CD4-positive, alpha-beta T cell (primary cell): ENCODE measurements at regions of chr16 and their contacts with region 1.

Region 1: DNA sequence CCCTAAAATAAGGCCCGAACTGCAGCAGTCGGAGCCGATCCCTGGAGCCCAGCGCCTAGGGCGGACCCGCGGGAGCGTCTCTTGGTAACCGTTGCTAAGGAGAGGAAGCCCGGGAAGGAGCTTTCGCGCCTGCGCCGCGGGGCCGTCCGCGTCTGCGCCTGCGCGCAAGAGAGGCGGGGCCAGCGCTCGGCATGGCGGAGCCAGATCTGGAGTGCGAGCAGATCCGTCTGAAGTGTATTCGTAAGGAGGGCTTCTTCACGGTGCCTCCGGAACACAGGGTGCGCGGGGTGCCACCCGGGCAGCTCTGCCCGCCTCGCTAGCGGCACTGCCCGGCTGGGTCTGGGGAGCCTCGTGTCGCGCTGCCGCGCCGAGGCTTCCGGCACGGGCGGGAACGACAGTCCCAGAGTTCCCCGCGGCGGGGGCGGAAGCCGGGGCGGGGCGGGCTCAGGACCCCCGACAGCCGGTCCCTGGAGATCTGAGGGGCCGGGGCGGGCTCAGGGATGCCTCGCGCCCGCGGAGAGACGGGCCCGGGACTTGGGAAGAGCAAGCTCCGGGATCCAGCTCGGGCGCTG is at the start of gene CDK10:
- DNase-seq: peak; percentile 72 to 92 (median 86)
- ATAC-seq: peak; percentile 91
- H3K4me3 ChIP-seq: peak within 1 kb of the TSS; percentile 87
- H3K4me3 Mint-ChIP-seq: peak within 1 kb of the TSS; percentile 94
- H3K27ac ChIP-seq: peak within 1 kb of the TSS; percentile 73 to 79
- H3K27ac Mint-ChIP-seq: peak within 1 kb of the TSS; percentile 78
- H3K4me1 ChIP-seq: peaks cover 20% of the 10 kb centered on the region
- H3K4me1 Mint-ChIP-seq: peaks cover 5% of the 10 kb centered on the region
- H3K27me3 ChIP-seq: no peaks in the 10 kb centered on the region
- H3K27me3 Mint-ChIP-seq: no peaks in the 10 kb centered on the region
- CTCF ChIP-seq: no peak
- total RNA-seq, gene CDK10: 58.9 to 62.8 TPM

Region 2: DNA sequence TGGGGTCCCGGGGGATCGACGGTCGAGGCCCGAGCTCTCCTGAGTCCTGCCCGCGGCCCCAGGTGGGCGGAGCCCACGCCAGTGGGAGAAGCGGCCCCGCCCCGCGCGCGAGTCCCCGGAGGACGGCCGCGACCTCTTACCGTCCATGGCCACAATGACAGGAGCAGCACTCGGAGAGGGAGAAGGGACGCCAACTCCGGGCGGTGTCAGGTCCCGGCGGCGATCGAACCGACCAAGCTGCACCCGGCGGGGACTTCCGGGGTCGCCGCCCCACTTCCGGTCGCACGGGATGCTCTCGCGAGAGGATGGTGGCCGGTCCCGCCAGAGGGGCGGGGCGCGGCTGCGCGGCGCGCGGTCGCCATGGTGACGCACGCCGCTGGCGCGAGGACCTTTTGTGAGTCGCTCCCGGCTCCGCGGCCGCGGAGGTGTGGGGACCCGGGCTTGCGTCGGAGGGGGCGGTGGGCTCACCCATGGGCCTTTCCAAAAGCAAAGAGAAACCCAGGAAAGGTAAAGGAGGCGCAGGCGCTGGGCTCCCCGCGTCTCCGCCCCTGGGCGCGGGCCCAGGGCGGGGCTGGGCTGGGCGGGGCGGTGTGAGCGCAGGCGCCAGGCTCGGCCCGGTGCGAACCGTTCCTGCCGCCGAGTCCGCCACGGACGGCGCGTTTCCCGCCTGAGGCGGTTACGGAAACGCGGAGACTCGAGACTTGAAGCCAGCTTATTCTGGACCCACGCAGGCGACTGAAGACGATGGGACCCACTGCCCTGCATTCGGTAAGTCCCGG is 29.0 kb before region 1 on chr16 and contains the starts of genes CHMP1A and SPATA33:
- CTCF ChIA-PET with region 1: no interaction called
- POLR2A ChIA-PET with region 1: no interaction called
- intact Hi-C with region 1: loop called in 1 of 2 experiments (anchors 1 kb)
- DNase-seq: peak; percentile 82 to 97 (median 92)
- ATAC-seq: peak; percentile 88
- H3K4me3 ChIP-seq: peak within 1 kb of the TSS; percentile 91
- H3K4me3 Mint-ChIP-seq: peak within 1 kb of the TSS; percentile 93
- H3K27ac ChIP-seq: peak within 1 kb of the TSS; percentile 55 to 81
- H3K27ac Mint-ChIP-seq: peak within 1 kb of the TSS; percentile 81
- H3K4me1 ChIP-seq: peaks cover 34% of the 10 kb centered on the region
- H3K4me1 Mint-ChIP-seq: peaks cover 34% of the 10 kb centered on the region
- H3K27me3 ChIP-seq: no peaks in the 10 kb centered on the region
- H3K27me3 Mint-ChIP-seq: no peaks in the 10 kb centered on the region
- CTCF ChIP-seq: no peak
- total RNA-seq, gene CHMP1A: 54.7 to 55.9 TPM
- total RNA-seq, gene SPATA33: 4.4 to 7.1 TPM

Region 3: DNA sequence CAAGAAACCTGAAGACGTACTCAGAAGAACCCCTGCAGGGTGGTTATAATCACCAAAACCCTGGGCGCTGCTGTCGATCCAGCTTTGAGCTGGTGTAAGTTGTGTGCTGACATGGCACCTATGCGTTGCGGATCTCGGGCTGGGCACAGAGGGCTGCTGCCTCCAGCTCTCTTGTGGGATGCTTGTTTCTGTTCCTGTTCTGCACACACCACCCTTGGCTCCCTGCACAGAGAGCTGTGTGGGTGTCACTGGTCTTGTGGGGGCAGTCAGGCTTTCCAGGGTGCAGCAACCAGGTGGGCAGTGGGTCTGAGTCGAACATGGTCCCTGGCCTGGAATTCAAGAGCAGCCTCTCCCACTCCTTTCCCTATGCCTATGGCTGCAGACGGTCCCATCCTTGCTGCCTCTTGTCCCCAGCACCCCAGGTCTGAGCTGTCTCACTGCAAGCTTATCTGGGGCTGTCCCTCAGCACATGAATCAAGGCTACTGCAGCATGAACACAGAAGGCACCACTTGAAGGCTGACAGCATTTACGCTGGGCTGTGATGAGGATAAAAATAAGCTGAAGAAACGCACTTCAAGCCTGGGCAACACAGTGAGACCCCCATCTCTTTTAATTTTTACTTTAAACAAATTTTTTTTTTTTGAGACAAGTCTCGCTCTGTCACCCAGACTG is 54.9 kb after region 1 on chr16:
- CTCF ChIA-PET with region 1: no interaction called
- POLR2A ChIA-PET with region 1: no interaction called
- intact Hi-C with region 1: no loop called
- DNase-seq: no peak
- ATAC-seq: no peak
- H3K4me3 ChIP-seq: no peak overlapping the region
- H3K4me3 Mint-ChIP-seq: peak overlapping the region; percentile 11
- H3K27ac ChIP-seq: no peak overlapping the region
- H3K27ac Mint-ChIP-seq: peak overlapping the region; percentile 64
- H3K4me1 ChIP-seq: peaks cover 65% of the 10 kb centered on the region
- H3K4me1 Mint-ChIP-seq: peaks cover 37% of the 10 kb centered on the region
- H3K27me3 ChIP-seq: no peaks in the 10 kb centered on the region
- H3K27me3 Mint-ChIP-seq: no peaks in the 10 kb centered on the region
- CTCF ChIP-seq: no peak